Ovary (tissue), 10 donors: ENCODE measurements at regions of chr1 and their contacts with region 1.

Region 1: GRCh38 chr1:4652631-4653327 is 1.6 kb upstream of the AJAP1 start:
- DNase-seq: peak; percentile 51 to 83 (median 57)
- H3K4me3 ChIP-seq: no peak overlapping the region
- H3K27ac ChIP-seq: no peak overlapping the region
- H3K4me1 ChIP-seq: peaks cover 4% of the 10 kb centered on the region
- H3K27me3 ChIP-seq: no peaks in the 10 kb centered on the region
- CTCF ChIP-seq: peak; percentile 69 to 92 (median 81)
- EP300 ChIP-seq: no peak
- POLR2A ChIP-seq: no peak

Region 2: DNA sequence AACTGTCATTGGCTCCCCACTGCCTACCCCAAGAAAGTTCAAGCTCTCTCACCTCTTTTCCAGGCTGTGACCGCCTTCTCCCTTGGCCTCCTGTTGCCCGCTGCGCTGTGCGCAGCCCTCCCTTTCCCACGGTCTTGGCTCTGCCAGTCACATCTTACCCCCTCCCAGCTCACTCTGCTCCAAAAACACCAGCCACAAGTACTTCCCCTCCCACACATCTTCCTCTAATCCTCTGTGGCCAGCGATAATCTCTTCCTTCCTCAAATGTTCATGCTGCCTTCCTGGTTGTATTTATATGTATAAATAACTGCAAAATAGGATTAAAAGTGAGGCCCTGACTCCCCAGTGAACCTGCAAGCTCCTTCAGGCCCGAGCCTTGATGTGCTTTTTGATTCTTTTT is 83.5 kb after region 1 on chr1:
- intact Hi-C with region 1: no loop called
- DNase-seq: no peak
- H3K4me3 ChIP-seq: no peak overlapping the region
- H3K27ac ChIP-seq: no peak overlapping the region
- H3K4me1 ChIP-seq: no peaks in the 10 kb centered on the region
- H3K27me3 ChIP-seq: no peaks in the 10 kb centered on the region
- CTCF ChIP-seq: no peak
- EP300 ChIP-seq: no peak
- POLR2A ChIP-seq: no peak

Region 3: GRCh38 chr1:5514519-5515183 is 861.9 kb after region 1 on chr1:
- intact Hi-C with region 1: loop called in 1 of 4 experiments (anchors 10 kb)
- DNase-seq: peak; percentile 60 to 85 (median 75)
- H3K4me3 ChIP-seq: no peak overlapping the region
- H3K27ac ChIP-seq: no peak overlapping the region
- H3K4me1 ChIP-seq: no peaks in the 10 kb centered on the region
- H3K27me3 ChIP-seq: no peaks in the 10 kb centered on the region
- CTCF ChIP-seq: peak; percentile 65 to 92 (median 88)
- EP300 ChIP-seq: no peak
- POLR2A ChIP-seq: no peak

Region 4: GRCh38 chr1:5611851-5612250 is 959.1 kb after region 1 on chr1:
- intact Hi-C with region 1: loop called in 1 of 4 experiments (anchors 10 kb)
- DNase-seq: no peak
- H3K4me3 ChIP-seq: no peak overlapping the region
- H3K27ac ChIP-seq: no peak overlapping the region
- H3K4me1 ChIP-seq: no peaks in the 10 kb centered on the region
- H3K27me3 ChIP-seq: no peaks in the 10 kb centered on the region
- CTCF ChIP-seq: no peak
- EP300 ChIP-seq: no peak
- POLR2A ChIP-seq: no peak

Region 5: GRCh38 chr1:5745776-5746610 is 1093.2 kb after region 1 on chr1:
- intact Hi-C with region 1: loop called in 2 of 4 experiments (anchors 5 to 10 kb)
- DNase-seq: peak; percentile 59 to 81 (median 69)
- H3K4me3 ChIP-seq: no peak overlapping the region
- H3K27ac ChIP-seq: no peak overlapping the region
- H3K4me1 ChIP-seq: no peaks in the 10 kb centered on the region
- H3K27me3 ChIP-seq: no peaks in the 10 kb centered on the region
- CTCF ChIP-seq: peak; percentile 61 to 78 (median 62)
- EP300 ChIP-seq: no peak
- POLR2A ChIP-seq: no peak

Region 6: GRCh38 chr1:5751833-5752745 is 1099.3 kb after region 1 on chr1:
- intact Hi-C with region 1: loop called in 2 of 4 experiments (anchors 5 to 10 kb)
- DNase-seq: peak in 1 of 5 donors; percentile 3
- H3K4me3 ChIP-seq: no peak overlapping the region
- H3K27ac ChIP-seq: no peak overlapping the region
- H3K4me1 ChIP-seq: peaks cover 1% of the 10 kb centered on the region
- H3K27me3 ChIP-seq: no peaks in the 10 kb centered on the region
- CTCF ChIP-seq: no peak
- EP300 ChIP-seq: no peak
- POLR2A ChIP-seq: no peak

Region 7: DNA sequence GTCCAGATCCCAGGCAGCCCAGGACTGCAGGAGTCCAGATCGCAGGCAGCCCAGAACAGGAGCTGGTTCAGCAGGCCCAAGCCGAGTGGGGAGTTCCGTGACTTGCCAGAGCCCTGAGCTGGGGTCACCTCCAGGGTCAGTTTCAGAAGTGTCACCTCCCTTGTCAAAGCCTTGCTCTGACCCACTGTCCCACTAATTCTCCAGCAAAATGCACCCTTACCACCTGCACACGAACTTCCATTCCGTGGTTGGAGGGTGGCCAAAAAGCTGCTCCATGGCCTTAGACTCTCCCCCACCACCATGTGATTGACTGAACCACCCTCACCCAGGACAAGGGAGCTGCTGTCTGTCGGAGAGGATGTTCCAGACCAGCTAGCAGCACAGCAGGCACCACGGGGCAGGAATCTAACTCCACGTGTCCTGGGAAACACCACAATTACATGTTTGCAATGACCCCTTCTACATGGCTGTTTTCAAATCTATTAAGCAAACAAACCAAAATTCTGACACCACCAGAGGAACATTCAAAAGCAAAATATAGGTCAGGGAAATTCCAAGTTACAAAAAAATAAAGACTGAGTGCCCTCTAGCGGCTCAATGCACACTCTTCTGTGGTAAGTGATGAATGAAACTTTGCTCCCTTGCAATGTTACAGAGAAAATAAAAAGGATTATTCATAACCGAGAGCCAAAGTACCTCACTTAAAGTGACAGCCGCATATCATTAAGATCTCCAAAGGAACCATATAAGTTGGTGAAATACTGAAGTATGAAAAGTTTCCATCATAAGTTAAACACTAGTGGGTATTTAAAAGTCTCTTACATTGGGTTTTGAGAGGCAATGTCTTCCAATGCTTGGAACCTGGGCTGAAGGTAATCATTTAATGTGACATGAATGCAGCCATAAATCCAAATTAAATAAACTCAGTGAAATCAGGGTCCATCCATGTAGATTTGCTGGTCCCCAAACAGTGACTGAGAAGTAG is 1263.1 kb after region 1 on chr1:
- intact Hi-C with region 1: loop called in 2 of 4 experiments (anchors 5 to 10 kb)
- DNase-seq: peak; percentile 43 to 69 (median 56)
- H3K4me3 ChIP-seq: no peak overlapping the region
- H3K27ac ChIP-seq: peak overlapping the region in 1 of 2 donors; percentile 53
- H3K4me1 ChIP-seq: peaks cover 7% of the 10 kb centered on the region
- H3K27me3 ChIP-seq: no peaks in the 10 kb centered on the region
- CTCF ChIP-seq: peak; percentile 61 to 71 (median 66)
- EP300 ChIP-seq: no peak
- POLR2A ChIP-seq: no peak

Region 8: GRCh38 chr1:5975133-5975880 is 1322.5 kb after region 1 on chr1:
- intact Hi-C with region 1: loop called in 1 of 4 experiments (anchors 10 kb)
- DNase-seq: peak; percentile 48 to 82 (median 63)
- H3K4me3 ChIP-seq: no peak overlapping the region
- H3K27ac ChIP-seq: no peak overlapping the region
- H3K4me1 ChIP-seq: no peaks in the 10 kb centered on the region
- H3K27me3 ChIP-seq: no peaks in the 10 kb centered on the region
- CTCF ChIP-seq: peak; percentile 51 to 66 (median 55)
- EP300 ChIP-seq: no peak
- POLR2A ChIP-seq: no peak